ENCODE measurements at regions of chr9 and their contacts with region 1.

Region 1: GRCh38 chr9:137295238-137295811 is 6.7 kb downstream of the NRARP start:
- DNase-seq: peak; percentile 91
- H3K4me3 Mint-ChIP-seq: no peak overlapping the region
- H3K27ac Mint-ChIP-seq: no peak overlapping the region
- H3K4me1 Mint-ChIP-seq: peaks cover 5% of the 10 kb centered on the region
- H3K27me3 Mint-ChIP-seq: peaks cover 42% of the 10 kb centered on the region

Region 2: GRCh38 chr9:137383081-137383889 is 88.0 kb after region 1 on chr9:
- intact Hi-C with region 1: no loop called
- DNase-seq: no peak
- H3K4me3 Mint-ChIP-seq: no peak overlapping the region
- H3K27ac Mint-ChIP-seq: no peak overlapping the region
- H3K4me1 Mint-ChIP-seq: no peaks in the 10 kb centered on the region
- H3K27me3 Mint-ChIP-seq: no peaks in the 10 kb centered on the region

Region 3: GRCh38 chr9:137406876-137407589 is 111.7 kb after region 1 on chr9:
- intact Hi-C with region 1: loop called (anchors 2 kb)
- DNase-seq: peak; percentile 93
- H3K4me3 Mint-ChIP-seq: no peak overlapping the region
- H3K27ac Mint-ChIP-seq: no peak overlapping the region
- H3K4me1 Mint-ChIP-seq: peaks cover 3% of the 10 kb centered on the region
- H3K27me3 Mint-ChIP-seq: peaks cover 4% of the 10 kb centered on the region

Region 4: GRCh38 chr9:137445275-137445807 is 150.0 kb after region 1 on chr9:
- intact Hi-C with region 1: no loop called
- DNase-seq: peak; percentile 96
- H3K4me3 Mint-ChIP-seq: no peak overlapping the region
- H3K27ac Mint-ChIP-seq: no peak overlapping the region
- H3K4me1 Mint-ChIP-seq: peaks cover 10% of the 10 kb centered on the region
- H3K27me3 Mint-ChIP-seq: peaks cover 13% of the 10 kb centered on the region

Region 5: DNA sequence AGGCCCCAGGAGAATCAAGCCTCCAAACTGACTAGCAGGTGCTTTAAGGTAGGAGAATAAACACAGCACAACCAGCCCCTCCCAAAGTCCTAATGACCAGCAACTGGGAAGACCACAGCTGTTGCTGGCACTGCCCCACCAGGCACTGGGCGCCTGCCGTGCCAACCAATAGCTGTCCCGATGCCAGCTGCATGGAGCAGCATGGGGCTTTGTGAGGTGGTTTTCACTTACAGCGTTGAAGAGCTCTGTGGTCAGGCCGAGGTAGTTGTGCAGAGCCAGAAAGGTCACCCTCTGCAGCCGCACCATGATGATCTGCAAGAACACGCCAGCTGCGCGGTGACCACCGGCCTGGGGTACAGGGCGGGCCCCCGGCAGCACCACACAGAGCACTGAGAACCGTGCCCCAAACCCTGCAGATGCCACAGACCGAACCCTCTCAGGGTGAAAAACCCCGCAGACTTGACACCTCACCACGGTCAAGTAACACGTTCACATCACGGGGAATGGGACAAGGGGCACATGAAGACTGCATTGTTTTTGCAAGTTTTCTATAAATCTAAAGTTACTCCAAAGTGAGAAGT is 226.2 kb after region 1 on chr9:
- intact Hi-C with region 1: loop called (anchors 10 kb)
- DNase-seq: no peak
- H3K4me3 Mint-ChIP-seq: no peak overlapping the region
- H3K27ac Mint-ChIP-seq: no peak overlapping the region
- H3K4me1 Mint-ChIP-seq: peaks cover 4% of the 10 kb centered on the region
- H3K27me3 Mint-ChIP-seq: no peaks in the 10 kb centered on the region